BJ (cell line): ENCODE measurements at regions of chr10 and their contacts with region 1.

Region 1: DNA sequence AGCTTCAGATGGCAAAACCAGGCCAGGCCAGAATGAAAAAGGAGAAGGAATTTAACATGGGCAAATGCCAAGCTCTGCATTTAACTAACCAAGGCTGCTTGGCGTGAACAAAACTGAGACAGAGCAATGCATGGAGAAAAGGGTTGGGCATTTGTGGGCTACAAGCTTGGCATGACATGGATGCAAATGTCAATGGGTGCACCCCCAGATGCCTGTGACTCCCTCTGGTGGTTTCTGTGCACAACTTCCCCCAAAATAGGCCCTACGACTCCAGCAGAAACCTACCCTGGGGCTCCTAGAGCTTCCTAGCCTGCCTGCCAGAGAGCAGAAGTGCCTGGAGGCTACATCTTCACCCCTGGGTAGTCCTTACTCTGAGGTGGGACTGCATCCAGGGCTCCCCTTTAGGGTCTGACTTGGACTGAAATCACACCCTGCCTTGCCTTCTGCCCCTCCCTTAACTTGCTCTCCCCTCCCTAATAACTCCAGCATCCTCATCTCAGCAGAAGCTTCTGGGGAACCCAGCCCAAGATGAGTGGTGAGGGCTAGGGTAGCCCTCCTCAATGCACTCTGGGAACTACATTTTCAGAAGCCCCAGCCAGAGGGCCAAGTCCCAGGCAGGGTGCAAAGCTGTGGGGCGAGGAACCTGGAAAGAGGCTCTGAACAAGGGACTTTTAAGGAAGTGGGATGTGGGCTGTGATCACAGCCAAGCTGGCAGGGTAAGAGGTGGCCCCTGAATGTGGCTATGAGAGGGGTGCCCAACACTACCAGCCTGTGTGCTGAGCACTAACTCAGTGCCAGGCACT is 11.3 kb downstream of the GPRIN2 start:
- DNase-seq: no peak
- H3K4me3 ChIP-seq: no peak overlapping the region
- H3K27me3 ChIP-seq: no peaks in the 10 kb centered on the region; the same call in 1 of the 2 replicates
- CTCF ChIP-seq: peak; percentile 57

Region 2: DNA sequence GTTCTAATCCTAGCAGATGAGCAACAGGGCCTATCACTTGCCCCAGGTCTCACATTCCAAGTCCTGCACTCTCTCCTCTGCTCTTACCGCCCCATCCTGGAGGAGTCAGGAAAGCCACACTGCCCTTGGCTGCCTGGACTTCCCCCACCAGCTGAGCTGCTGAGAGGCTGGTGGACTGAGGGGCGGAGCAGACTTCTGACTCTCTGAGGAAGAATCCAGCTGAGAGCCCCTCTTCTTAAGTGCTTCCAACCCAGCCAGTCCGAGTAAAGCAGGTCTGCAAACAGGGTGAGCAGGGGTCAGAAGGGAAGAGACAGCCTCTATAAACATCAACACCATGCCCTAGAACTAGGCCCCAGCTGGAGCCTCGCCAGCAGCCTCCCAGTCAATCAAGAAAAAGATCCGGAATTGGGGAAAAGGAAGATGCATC is 1726.5 kb before region 1 on chr10:
- CTCF ChIA-PET with region 1: no interaction called
- POLR2A ChIA-PET with region 1: no interaction called
- DNase-seq: no peak
- H3K4me3 ChIP-seq: no peak overlapping the region
- H3K27me3 ChIP-seq: no peaks in the 10 kb centered on the region
- CTCF ChIP-seq: no peak

Region 3: GRCh38 chr10:46228563-46229071 is 316.6 kb before region 1 on chr10:
- CTCF ChIA-PET with region 1: interaction called, 10 read pairs
- POLR2A ChIA-PET with region 1: no interaction called
- DNase-seq: peak; percentile 9
- H3K4me3 ChIP-seq: no peak overlapping the region
- H3K27me3 ChIP-seq: peaks cover 8% of the 10 kb centered on the region
- CTCF ChIP-seq: peak; percentile 96

Region 4: DNA sequence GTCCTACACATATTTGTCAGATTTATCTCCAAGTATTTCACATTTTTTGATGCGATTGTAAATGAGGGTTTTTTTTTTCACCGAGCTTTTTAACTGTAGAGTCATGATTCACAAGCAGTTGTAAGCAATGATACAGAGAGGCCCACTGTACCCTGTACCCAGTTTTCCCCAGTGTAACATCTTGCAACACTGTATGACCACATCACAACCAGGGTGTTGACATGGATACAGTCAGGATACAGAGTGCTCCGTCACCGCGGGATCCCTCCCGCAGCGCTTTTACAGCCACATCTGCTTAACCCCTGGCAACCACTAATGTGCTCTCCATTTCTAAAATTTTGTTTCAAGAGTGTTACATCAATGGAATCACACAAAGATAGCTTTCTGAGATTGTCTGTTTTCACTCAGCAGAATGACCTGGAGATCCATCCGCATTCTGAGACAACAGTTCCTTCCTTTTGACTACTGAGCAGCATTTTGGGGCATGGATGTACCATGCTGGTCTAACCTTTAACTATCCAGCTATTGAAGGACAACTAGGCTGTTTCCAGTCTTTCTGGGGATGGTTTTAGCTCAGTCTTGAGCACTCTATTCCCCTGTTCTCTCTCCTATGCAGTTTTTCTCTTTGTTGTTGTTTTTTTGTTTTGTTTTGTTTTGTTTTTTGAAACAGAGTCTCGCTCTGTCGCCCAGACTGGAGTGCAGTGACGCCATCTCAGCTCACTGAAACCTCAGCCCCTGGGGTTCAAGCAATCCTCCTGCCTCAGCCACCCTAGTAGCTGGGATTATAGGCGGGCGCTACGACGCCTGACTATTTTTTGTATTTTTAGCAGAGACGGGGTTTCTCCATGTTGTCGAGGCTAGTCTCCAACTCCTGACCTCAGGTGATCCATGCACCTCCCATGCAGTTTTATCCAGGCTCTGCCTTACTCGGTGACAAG is 14.7 kb before region 1 on chr10:
- CTCF ChIA-PET with region 1: interaction called, 14 read pairs
- POLR2A ChIA-PET with region 1: no interaction called
- DNase-seq: peak; percentile 97
- H3K4me3 ChIP-seq: no peak overlapping the region
- H3K27me3 ChIP-seq: no peaks in the 10 kb centered on the region
- CTCF ChIP-seq: no peak

Region 5: DNA sequence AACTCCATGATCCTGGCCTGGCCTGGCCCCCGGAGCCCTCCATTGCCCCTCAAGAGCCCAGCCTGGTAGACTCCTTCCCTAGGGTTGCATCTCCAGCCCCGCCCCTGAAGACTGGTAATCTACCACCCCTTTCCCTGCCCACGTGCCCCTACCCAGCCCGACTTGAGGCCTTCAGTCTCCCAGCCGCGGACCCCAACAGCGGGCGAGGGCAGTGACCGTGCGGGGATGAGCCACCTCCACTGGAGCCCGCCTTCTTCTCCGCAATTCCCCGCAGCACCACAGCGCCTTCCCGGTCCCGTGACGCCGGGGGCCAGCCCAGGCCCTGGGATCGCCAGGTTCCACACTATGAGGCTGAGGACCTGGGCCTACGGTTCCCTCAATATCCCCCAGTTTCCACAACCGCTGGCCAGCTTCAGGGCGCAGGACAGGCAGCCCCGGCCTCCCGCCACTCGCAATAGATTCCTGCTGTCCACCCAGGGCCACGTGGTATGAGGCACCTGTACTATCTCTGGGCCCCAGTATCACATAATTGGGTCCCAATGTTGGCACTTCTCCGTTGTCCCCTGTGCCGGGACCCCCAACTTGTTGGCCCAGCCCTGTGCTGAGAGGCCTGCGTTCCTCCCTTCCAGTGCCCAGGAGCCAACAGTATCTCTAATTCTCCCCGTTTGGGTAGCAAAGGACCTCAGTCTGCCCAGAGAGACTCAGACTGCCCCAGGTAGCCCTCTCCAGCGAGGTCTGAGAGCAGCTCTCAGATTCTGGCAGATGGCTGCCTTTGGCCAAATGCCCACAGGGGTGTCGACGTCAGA is 12.3 kb after region 1 on chr10:
- CTCF ChIA-PET with region 1: interaction called, 18 read pairs
- POLR2A ChIA-PET with region 1: no interaction called
- DNase-seq: no peak
- H3K4me3 ChIP-seq: no peak overlapping the region
- H3K27me3 ChIP-seq: peaks cover 33% of the 10 kb centered on the region
- CTCF ChIP-seq: no peak